Dendritic cell treated with granulocyte-macrophage colony-stimulating factor and Interleukin-4, amounts not matched to agents 40 ng/mL and 50 ng/mL, for 4 days (primary cell): ENCODE measurements at regions of chr15 and their contacts with region 1.

Region 1: DNA sequence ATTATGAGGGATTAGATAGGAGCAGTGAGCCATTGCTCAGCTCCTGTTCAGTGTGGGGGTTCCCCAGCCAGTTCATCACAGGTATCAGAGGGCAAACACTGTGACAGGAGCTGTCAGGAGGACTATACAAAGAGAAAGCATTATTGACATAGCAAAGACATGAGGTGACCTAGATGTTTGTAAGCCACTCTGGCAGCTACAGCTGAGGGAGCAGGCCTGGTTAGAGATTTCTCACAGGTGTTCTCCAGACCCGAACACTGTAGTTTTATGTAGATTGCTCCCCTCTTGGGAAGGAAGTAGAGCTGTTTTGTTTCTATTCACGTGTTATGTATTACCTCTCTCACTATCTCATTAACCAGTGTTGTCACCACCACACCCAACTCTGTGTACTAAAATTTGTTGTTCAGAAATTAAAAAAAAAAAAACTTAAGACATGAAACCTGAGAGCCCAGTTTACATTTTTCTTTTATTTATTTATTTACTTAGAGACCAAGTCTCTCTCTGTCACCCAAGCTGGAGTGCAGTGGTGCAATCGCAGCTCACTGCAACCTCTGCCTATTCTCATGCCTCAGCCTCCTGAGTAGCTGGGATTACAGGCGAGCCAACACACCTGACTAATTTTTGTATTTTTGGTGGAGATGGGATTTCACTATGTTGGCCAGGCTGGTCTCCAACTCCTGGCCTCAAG is 123.7 kb downstream of the RBPMS2 start:
- H3K4me3 Mint-ChIP-seq: no peak overlapping the region
- H3K27ac Mint-ChIP-seq: no peak overlapping the region
- H3K4me1 Mint-ChIP-seq: peaks cover 4% of the 10 kb centered on the region
- H3K27me3 Mint-ChIP-seq: no peaks in the 10 kb centered on the region

Region 2: GRCh38 chr15:64430000-64430735 is 221.5 kb before region 1 on chr15:
- intact Hi-C with region 1: loop called (anchors 10 kb)
- H3K4me3 Mint-ChIP-seq: no peak overlapping the region
- H3K27ac Mint-ChIP-seq: no peak overlapping the region
- H3K4me1 Mint-ChIP-seq: peaks cover 12% of the 10 kb centered on the region
- H3K27me3 Mint-ChIP-seq: no peaks in the 10 kb centered on the region

Region 3: DNA sequence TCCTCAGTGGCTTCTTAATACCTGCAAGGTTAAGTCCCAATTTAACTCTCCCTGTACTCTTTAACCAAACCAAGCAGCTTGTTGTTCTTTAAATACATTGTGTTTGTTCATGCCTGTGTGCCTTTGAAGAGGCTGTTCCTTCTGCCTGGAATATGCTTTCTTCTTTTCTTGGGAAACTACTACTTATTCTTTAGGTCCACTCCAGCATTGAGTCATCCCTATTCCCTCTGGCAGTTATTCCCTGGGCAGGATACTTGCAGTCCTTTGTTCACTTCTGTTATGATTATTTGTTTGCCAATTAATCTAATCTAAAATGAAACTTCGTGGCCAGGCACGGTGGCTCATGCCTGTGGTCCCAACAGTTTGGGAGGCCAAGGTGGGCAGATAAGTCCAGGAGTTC is 52.0 kb before region 1 on chr15:
- intact Hi-C with region 1: loop called (anchors 10 kb)
- H3K4me3 Mint-ChIP-seq: no peak overlapping the region
- H3K27ac Mint-ChIP-seq: no peak overlapping the region
- H3K4me1 Mint-ChIP-seq: peaks cover 31% of the 10 kb centered on the region
- H3K27me3 Mint-ChIP-seq: no peaks in the 10 kb centered on the region

Region 4: DNA sequence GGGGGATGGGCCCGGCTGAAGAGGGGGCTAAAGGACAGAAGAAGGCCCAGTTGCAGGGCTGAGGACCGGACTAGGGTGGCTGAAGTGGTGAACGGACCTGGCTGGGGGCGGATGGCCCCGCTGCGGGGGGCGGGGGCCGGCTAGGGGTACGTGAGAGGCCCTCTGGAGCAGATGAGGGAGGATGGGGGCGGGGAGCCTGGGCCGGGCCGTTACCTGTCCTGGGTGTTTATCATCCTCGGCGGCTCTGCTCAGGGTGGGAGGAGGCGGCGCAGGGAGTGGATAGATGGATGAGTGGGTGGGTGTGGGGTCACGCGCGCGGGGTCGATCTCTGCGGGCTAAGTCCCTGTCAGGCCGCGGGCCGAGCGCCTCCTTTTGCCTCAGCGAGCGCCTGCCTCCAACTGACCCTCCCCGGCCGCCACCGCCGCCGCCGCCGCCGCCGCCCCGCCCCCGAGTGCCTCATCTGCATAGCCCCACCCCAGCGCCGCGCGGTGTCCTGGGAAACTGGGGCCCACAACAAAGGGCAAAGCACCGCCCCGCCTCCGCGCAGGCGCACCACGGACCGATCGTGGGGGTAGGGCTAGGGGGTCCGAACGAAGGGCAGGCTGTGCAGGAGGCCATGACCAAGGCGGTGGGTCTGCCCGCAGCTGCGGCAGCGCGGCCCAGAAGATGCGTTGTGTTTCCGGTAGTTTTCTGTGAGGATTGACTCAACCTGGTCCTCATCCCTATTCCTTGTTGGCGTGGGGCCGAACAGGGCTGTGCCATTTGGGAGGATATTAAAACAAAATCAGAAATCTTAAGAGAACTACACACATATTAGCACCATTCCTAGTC is 51.3 kb after region 1 on chr15:
- intact Hi-C with region 1: no loop called
- H3K4me3 Mint-ChIP-seq: peak overlapping the region; percentile 85
- H3K27ac Mint-ChIP-seq: peak overlapping the region; percentile 80
- H3K4me1 Mint-ChIP-seq: peaks cover 61% of the 10 kb centered on the region
- H3K27me3 Mint-ChIP-seq: no peaks in the 10 kb centered on the region